Activated naive CD4-positive, alpha-beta T cell treated with anti-CD3 and anti-CD28 coated beads, Interleukin-2, amount 10 ng/mL, durations not matched to agents 7 days and 5 days (primary cell): ENCODE measurements at regions of chr3 and their contacts with region 1.

Region 1: GRCh38 chr3:32296256-32297204 is 58.0 kb downstream of the CMTM8 start:
- DNase-seq: peak; percentile 73
- H3K4me3 Mint-ChIP-seq: no peak overlapping the region
- H3K27ac Mint-ChIP-seq: peak overlapping the region; percentile 91
- H3K4me1 Mint-ChIP-seq: peaks cover 43% of the 10 kb centered on the region
- H3K27me3 Mint-ChIP-seq: no peaks in the 10 kb centered on the region

Region 2: DNA sequence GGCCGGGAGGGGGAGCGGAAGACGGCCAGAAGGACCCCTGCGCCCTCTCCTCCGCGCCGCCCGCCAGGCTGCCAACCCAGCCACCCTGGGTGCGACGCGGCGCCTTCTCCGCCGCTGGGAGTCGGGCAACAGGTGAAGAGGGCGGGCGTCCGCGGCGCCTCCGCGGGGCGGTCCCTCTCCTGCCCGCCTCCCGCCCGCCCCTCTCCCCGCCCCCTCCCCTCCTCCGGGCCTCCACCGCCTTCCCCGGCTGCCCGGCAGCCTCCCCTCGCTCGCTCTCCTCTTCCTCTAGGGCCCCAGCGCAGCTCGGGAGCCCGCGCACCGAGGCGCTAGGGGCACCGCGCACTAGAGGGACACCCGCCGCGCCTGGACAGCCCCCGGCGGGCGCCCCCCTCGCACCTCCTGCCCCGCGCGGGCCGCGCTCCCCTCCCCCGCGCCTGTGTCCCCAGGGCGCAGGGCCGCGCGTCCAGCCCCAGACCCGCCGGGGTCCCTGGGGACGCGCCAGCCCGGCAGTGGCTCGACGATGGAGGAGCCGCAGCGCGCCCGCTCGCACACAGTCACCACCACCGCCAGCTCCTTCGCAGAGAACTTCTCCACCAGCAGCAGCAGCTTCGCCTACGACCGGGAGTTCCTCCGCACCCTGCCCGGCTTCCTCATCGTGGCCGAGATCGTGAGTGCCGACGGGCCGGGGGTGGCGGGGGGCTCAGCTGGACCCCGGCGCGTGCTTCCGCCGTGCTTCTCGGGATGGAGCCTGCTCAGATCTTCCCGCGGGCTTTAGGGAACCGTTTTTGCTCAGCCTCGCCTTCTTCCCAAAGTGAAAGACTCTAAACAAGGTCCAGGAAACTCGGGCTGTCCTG is 57.9 kb before region 1 on chr3 and contains the start of gene CMTM8:
- CTCF ChIA-PET with region 1: interaction called, 15 read pairs
- DNase-seq: peak; percentile 78
- H3K4me3 Mint-ChIP-seq: peak within 1 kb of the TSS; percentile 78
- H3K27ac Mint-ChIP-seq: peak within 1 kb of the TSS; percentile 59
- H3K4me1 Mint-ChIP-seq: peaks cover 31% of the 10 kb centered on the region
- H3K27me3 Mint-ChIP-seq: peaks cover 35% of the 10 kb centered on the region

Region 3: DNA sequence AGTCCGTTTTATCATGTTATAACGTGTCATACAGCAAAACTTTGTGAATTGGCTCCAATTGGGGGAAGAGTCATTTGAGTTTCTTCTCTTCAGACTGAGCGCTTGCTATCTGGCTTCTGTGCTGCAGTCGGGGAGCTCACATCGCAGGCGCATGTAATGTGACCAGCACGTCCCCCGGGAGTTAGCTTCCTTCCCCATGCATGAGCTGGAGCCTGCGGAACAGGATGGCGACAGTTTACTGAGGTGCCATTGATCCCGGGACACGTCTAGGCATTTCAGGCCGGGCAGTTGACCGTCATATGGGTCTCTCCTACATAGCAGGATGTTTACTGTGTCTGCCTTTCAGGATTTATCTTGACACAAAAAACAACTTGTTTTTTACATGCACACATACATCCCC is 13.2 kb before region 1 on chr3:
- CTCF ChIA-PET with region 1: interaction called, 20 read pairs
- DNase-seq: no peak
- H3K4me3 Mint-ChIP-seq: no peak overlapping the region
- H3K27ac Mint-ChIP-seq: no peak overlapping the region
- H3K4me1 Mint-ChIP-seq: peaks cover 25% of the 10 kb centered on the region
- H3K27me3 Mint-ChIP-seq: no peaks in the 10 kb centered on the region

Region 4: DNA sequence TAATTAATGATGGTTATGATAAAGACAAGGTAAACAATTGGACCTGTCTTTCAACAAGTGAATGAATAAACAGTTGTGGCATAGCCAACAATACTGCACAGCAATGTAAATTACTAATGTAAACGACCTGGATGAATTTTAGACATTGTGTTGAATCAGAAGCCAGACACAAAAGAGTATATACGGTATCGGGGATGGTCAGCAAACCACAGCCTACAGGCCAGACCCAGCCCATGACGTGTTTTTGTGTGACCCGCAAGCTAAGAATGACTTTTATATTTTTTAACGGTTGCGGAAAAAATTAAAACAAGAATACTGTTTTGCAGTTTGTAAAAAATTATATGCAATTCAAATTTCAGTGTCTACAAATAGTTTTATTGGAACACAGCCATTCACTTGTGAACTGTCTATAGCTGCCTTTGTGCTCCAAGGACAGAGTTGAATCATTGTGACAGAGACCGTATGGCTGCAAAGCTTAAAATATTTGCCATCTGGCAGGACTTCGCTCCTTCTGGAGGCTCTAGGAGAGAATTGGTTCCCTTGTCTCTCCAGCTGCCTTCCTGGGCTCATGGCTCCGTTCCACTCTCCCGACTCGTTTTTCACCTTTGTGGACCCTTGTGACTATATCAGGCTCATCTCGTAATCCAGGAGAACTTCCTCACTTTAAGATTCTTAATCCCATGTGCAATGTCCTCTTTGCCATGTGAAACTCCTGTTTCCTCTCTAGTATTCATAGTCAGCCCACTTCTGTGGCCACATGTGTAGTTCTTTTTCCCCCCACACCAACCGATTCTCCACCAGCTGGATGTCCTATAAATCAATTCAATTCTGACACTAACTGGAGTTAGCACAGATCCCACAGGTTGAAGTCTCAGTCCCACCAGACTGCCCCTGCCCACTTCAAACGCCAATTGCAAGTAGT is 14.6 kb after region 1 on chr3:
- CTCF ChIA-PET with region 1: interaction called, 19 read pairs
- DNase-seq: no peak
- H3K4me3 Mint-ChIP-seq: no peak overlapping the region
- H3K27ac Mint-ChIP-seq: no peak overlapping the region
- H3K4me1 Mint-ChIP-seq: peaks cover 44% of the 10 kb centered on the region
- H3K27me3 Mint-ChIP-seq: no peaks in the 10 kb centered on the region

Region 5: GRCh38 chr3:32334675-32335074 is 38.1 kb after region 1 on chr3:
- CTCF ChIA-PET with region 1: interaction called, 124 read pairs
- DNase-seq: peak; percentile 79
- H3K4me3 Mint-ChIP-seq: no peak overlapping the region
- H3K27ac Mint-ChIP-seq: peak overlapping the region; percentile 10
- H3K4me1 Mint-ChIP-seq: peaks cover 49% of the 10 kb centered on the region
- H3K27me3 Mint-ChIP-seq: no peaks in the 10 kb centered on the region

Region 6: DNA sequence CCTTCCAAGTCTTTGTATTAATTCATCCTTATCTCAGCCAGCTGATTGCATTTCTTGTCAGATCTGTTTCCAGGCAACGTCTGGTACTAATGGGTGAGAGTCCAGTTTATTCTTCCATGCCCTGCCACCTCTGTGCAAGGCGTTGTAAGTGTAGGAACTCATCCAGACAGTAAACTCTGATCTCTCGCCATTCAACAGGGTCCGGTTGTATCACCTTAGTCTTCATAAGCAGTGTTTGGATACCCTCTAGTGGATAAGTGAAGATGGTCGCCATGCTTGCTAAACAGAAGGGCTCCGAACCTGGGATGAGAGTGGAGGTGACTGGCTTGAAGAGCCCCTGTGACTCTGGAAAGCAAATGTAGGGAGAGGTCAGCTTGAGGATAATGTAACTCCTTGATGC is 43.5 kb after region 1 on chr3:
- CTCF ChIA-PET with region 1: interaction called, 124 read pairs
- DNase-seq: peak; percentile 45
- H3K4me3 Mint-ChIP-seq: no peak overlapping the region
- H3K27ac Mint-ChIP-seq: no peak overlapping the region
- H3K4me1 Mint-ChIP-seq: peaks cover 24% of the 10 kb centered on the region
- H3K27me3 Mint-ChIP-seq: no peaks in the 10 kb centered on the region

Region 7: DNA sequence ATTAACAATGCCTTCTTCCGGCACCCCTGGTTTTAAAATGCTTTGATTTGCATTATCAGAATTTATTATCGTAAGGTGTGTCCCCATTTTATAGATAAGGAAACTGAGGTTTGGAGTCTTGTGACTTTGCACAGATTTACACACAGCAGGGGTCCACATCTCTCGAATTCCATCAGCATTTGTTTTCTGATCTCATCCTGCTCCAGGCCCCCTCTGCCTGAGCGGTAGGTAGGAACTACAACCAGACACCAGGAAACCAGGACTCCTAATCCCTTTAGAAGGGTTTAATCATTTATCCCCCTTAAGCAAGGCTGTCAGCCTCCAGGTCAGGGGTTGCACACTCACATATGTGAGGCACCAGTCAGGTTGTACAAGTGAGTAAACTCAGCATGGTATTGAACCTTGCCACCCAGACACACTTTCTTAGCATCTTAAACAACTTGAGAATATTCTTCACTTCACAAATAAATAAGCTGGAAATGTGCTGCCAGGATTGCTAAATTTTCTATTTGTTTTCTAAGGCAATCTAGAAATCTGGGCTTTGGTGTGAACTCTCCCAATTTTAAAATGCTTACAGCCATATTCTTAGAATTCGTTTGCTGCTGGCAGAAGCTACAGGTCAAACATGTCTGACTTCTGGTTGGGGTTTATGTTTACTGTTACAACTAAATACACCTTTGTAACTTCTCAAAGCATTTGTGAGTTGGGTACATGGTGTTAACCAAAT is 63.4 kb after region 1 on chr3:
- CTCF ChIA-PET with region 1: no interaction called
- DNase-seq: no peak
- H3K4me3 Mint-ChIP-seq: no peak overlapping the region
- H3K27ac Mint-ChIP-seq: no peak overlapping the region
- H3K4me1 Mint-ChIP-seq: no peaks in the 10 kb centered on the region
- H3K27me3 Mint-ChIP-seq: no peaks in the 10 kb centered on the region

Region 8: DNA sequence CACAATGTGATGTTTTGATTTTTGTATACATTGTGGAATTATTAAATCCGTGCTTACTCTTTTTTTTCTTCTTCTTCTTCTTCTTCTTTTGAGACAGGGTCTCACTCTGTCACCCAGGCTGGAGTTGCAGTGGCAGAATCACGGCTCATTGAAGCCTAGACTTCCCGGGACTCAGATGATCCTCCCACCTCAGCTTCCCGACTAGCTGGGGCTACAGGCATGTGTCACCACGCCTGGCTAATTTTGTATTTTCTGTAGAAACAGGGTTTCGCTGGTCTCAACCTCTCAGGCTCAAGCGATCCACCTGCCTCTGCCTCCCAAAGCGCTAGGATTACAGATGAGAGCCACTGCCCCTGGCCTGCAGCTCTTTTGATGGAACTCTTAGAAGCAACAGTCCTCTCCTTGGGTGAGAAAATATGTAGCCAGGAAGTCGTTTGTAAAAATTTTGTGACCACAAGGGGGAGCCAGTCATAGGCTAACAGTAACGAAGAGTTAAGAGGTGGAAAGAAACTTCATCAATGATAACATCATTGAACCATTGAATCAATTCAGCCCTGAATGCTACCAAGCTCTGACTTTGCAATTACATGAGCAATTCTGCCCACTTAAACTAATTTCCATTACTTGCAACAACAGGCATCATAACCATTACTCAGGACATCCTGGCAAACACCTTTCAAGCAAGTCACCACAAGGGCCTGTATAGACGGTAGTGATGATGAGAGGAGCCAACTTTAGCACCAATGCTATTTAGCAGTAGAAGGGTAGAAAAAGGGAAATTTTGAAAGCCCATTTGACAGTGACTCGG is 78.5 kb after region 1 on chr3:
- CTCF ChIA-PET with region 1: interaction called, 11 read pairs
- DNase-seq: peak; percentile 77
- H3K4me3 Mint-ChIP-seq: no peak overlapping the region
- H3K27ac Mint-ChIP-seq: peak overlapping the region; percentile 34
- H3K4me1 Mint-ChIP-seq: peaks cover 35% of the 10 kb centered on the region
- H3K27me3 Mint-ChIP-seq: no peaks in the 10 kb centered on the region

Region 9: GRCh38 chr3:32630266-32630665 is 333.7 kb after region 1 on chr3:
- CTCF ChIA-PET with region 1: no interaction called
- DNase-seq: no peak
- H3K4me3 Mint-ChIP-seq: no peak overlapping the region
- H3K27ac Mint-ChIP-seq: no peak overlapping the region
- H3K4me1 Mint-ChIP-seq: no peaks in the 10 kb centered on the region
- H3K27me3 Mint-ChIP-seq: peaks cover 17% of the 10 kb centered on the region